B cell (primary cell): ENCODE measurements at regions of chr17 and their contacts with region 1.

Region 1: DNA sequence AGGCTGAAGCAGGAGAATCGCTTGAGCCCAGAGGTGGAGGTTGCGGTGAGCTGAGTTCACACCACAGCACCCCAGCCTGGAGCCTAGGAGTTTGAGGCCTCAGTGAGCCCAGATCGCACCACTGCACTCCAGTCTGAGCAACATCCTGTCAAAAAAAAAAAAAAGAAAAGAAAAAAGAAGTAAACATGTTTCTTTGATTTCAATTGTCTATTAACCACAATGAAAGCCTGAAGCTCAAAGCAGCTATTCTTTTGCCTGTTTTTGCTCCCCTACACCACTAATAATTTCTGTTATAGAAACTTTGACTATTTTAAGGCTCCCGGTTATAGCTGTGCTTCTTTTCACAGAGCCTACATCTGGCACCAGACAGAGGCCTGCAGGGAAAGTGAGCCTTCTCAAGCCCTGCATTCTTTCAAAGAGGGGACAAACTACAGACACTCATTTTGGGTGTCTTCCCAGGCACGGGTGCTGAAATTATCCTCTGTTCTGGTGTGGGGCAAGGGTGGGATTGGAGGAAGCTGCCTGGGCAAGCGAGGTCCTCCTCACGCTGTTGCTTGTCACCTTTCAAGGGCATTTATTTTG is 14.2 kb upstream of the SLC52A1 start:
- DNase-seq: peak; percentile 74
- ATAC-seq: peak; percentile 91
- H3K4me3 ChIP-seq: no peak overlapping the region
- H3K4me3 Mint-ChIP-seq: peak overlapping the region; percentile 70
- H3K27ac ChIP-seq: peak overlapping the region; percentile 61 to 76
- H3K27ac Mint-ChIP-seq: peak overlapping the region; percentile 97
- H3K4me1 ChIP-seq: peaks cover 13 to 35% of the 10 kb centered on the region in 2 donors
- H3K4me1 Mint-ChIP-seq: peaks cover 41% of the 10 kb centered on the region
- H3K27me3 ChIP-seq: peaks cover 0 to 4% (median 0%) of the 10 kb centered on the region in 4 experiments
- H3K27me3 Mint-ChIP-seq: no peaks in the 10 kb centered on the region
- CTCF ChIP-seq: no peak

Region 2: GRCh38 chr17:4895657-4896331 is 153.6 kb before region 1 on chr17:
- CTCF ChIA-PET with region 1: no interaction called
- POLR2A ChIA-PET with region 1: interaction called, 10 read pairs
- intact Hi-C with region 1: no loop called
- DNase-seq: no peak
- ATAC-seq: no peak
- H3K4me3 ChIP-seq: no peak overlapping the region
- H3K4me3 Mint-ChIP-seq: no peak overlapping the region
- H3K27ac ChIP-seq: no peak overlapping the region
- H3K27ac Mint-ChIP-seq: no peak overlapping the region
- H3K4me1 ChIP-seq: peaks cover 21 to 22% of the 10 kb centered on the region in 2 donors
- H3K4me1 Mint-ChIP-seq: peaks cover 22% of the 10 kb centered on the region
- H3K27me3 ChIP-seq: peaks cover 0 to 21% (median 10%) of the 10 kb centered on the region in 4 experiments
- H3K27me3 Mint-ChIP-seq: no peaks in the 10 kb centered on the region
- CTCF ChIP-seq: no peak

Region 3: GRCh38 chr17:5031365-5032082 is 17.9 kb before region 1 on chr17:
- CTCF ChIA-PET with region 1: interaction called, 21 read pairs
- POLR2A ChIA-PET with region 1: interaction called, 7 read pairs
- intact Hi-C with region 1: loop called (anchors 2 kb)
- DNase-seq: peak; percentile 88
- ATAC-seq: peak; percentile 87
- H3K4me3 ChIP-seq: peak overlapping the region; percentile 34 to 67 (median 38)
- H3K4me3 Mint-ChIP-seq: peak overlapping the region; percentile 89
- H3K27ac ChIP-seq: peak overlapping the region; percentile 24 to 62
- H3K27ac Mint-ChIP-seq: peak overlapping the region; percentile 67
- H3K4me1 ChIP-seq: peaks cover 7 to 18% of the 10 kb centered on the region in 2 donors
- H3K4me1 Mint-ChIP-seq: peaks cover 25% of the 10 kb centered on the region
- H3K27me3 ChIP-seq: peaks cover 0 to 21% (median 5%) of the 10 kb centered on the region in 4 experiments
- H3K27me3 Mint-ChIP-seq: no peaks in the 10 kb centered on the region
- CTCF ChIP-seq: peak; percentile 80

Region 4: DNA sequence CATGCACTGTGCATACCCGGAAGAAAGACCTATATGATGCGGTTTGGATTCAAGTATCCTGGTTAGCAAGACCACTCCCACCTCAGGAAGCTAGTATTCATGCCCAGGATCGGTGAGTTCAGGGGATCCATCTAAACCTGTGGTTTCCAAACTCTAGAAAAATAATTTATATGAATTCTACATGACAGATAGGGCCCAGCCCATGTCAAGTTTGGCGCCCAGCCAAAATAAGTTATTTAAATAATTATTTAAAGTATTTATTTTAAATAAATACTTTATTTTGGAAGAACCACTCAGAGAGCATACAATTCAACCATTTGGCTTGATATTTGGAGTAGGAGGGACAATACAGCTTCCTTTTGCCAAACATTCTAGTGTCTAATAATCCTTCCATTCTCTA is 106.1 kb after region 1 on chr17:
- CTCF ChIA-PET with region 1: no interaction called
- POLR2A ChIA-PET with region 1: no interaction called
- intact Hi-C with region 1: no loop called
- DNase-seq: no peak
- ATAC-seq: no peak
- H3K4me3 ChIP-seq: no peak overlapping the region
- H3K4me3 Mint-ChIP-seq: no peak overlapping the region
- H3K27ac ChIP-seq: no peak overlapping the region
- H3K27ac Mint-ChIP-seq: no peak overlapping the region
- H3K4me1 ChIP-seq: no peaks in the 10 kb centered on the region
- H3K4me1 Mint-ChIP-seq: no peaks in the 10 kb centered on the region
- H3K27me3 ChIP-seq: peaks cover 0 to 3% (median 0%) of the 10 kb centered on the region in 4 experiments
- H3K27me3 Mint-ChIP-seq: peaks cover 23% of the 10 kb centered on the region
- CTCF ChIP-seq: no peak